ENCODE measurements at regions of chr15 and their contacts with region 1.

Region 1: GRCh38 chr15:77186594-77187011 is 115.7 kb upstream of the TSPAN3 start:
- DNase-seq: no peak
- ATAC-seq: peak; percentile 36

Region 2: DNA sequence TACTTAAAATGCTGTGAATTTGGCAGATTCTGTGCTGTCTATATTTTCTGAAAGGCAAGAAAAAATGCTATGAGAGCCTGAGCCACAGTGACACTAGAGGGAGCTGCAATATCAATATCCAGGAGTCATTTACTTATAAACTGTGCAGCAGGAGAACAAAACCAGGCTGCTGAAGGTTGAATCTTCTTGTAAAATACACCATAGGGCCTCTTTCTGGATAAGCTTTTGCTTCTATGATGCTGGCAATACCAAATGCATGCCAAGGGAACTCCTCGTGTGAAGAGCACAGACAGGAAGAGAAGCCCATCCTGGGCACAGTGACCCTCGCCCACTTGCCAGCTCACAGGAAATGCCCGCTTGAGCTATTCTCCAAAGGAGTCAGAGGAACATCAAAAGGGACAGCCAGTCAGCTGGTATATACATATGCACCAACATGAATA is 67.7 kb before region 1 on chr15:
- intact Hi-C with region 1: loop called (anchors 5 kb)
- DNase-seq: no peak
- ATAC-seq: peak; percentile 58

Region 3: GRCh38 chr15:77282333-77282732 is 95.7 kb after region 1 on chr15:
- intact Hi-C with region 1: no loop called
- DNase-seq: peak; percentile 50
- ATAC-seq: no peak

Region 4: DNA sequence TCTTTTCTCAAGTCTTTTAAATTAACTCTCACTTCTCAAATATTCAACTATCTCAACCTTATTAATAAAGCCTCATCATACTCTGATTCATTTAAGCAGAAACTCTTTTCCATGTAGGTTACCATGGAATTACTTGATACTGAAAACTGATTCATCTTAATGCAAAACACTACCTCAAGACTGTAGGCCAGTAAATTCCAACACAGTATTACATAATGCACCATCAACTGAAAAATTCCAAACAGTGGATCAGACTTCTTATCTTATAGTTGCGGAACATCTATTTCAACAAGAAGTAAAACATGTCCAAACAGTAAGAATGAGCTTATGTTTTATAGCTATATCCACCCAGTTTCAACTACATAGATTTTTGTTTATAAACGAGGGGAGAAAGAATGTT is 108.8 kb after region 1 on chr15:
- intact Hi-C with region 1: no loop called
- DNase-seq: no peak
- ATAC-seq: no peak

Region 5: DNA sequence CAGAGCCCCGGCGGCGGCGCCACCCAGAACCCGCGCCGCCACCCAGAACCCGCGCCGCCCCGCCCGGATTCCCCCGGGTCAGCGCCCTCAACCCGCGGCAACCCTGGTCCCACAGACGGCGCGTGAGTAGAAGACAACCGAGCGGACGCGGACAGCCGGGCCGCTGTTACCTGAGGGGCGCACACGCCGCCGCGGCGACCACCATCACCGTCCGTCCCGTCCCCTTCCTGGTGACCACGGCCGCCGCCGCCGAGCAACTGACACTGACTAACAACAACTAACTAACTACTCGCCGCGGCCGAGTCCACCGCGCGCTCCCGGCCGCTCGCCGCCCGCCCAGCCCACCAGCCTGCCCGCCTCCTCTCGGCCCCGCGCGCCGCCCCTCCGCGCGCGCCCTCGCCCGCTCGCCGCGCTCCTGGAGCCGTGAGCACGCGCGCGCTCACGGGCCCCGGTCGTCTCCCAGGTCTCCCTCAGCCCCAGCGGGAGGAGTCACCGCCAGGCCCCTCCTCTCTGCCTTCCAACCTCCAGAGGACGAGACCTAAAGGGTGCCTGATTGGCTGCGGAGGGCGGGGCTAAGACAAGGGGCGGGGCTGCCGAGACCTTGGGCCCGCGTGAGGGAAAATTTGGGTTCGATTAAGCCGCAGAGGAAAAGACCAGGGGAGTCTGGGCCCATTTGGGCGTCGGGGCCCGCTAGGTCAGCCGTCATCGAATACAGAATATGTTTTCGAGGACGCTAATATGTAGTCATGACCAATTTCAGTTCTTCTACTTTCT is 233.4 kb after region 1 on chr15 and contains the start of gene PEAK1:
- intact Hi-C with region 1: loop called (anchors 5 kb)
- DNase-seq: peak; percentile 99
- ATAC-seq: peak; percentile 99
- total RNA-seq, gene PEAK1: 66.6 TPM

Region 6: DNA sequence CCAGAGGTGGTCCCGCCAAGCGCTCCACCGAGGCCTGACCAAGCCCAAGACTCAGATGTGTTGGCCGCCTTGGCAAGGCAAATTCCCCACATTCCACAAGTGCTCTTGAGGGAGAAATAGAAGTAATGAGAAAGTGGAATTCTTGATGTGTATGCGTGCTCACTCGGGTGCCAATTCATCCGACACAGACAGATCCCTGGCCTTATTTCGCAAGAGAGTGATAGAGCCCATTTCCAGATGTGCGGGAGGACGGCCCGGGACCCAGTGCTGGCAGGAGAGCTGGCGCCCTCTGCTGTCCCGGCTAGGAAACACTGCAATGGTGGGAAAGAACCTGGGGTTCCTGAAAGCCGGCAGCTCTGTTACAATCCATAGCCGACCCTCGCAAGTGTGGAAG is 310.1 kb after region 1 on chr15:
- intact Hi-C with region 1: loop called (anchors 2 kb)
- DNase-seq: peak; percentile 95
- ATAC-seq: peak; percentile 87